ENCODE measurements at regions of chr1 and their contacts with region 1.

Region 1: GRCh38 chr1:206784471-206784903 is 12.2 kb upstream of the IL10 start:
- DNase-seq: peak; percentile 96
- ATAC-seq: peak; percentile 83
- H3K4me3 Mint-ChIP-seq: peak overlapping the region; percentile 32
- H3K27ac Mint-ChIP-seq: peak overlapping the region; percentile 79
- H3K4me1 Mint-ChIP-seq: peaks cover 65% of the 10 kb centered on the region
- H3K27me3 Mint-ChIP-seq: peaks cover 11% of the 10 kb centered on the region

Region 2: GRCh38 chr1:206725109-206725963 is 59.2 kb before region 1 on chr1:
- CTCF ChIA-PET with region 1: interaction called, 14 read pairs
- DNase-seq: peak; percentile 77
- ATAC-seq: peak; percentile 65
- H3K4me3 Mint-ChIP-seq: no peak overlapping the region
- H3K27ac Mint-ChIP-seq: peak overlapping the region; percentile 24
- H3K4me1 Mint-ChIP-seq: peaks cover 59% of the 10 kb centered on the region
- H3K27me3 Mint-ChIP-seq: no peaks in the 10 kb centered on the region

Region 3: DNA sequence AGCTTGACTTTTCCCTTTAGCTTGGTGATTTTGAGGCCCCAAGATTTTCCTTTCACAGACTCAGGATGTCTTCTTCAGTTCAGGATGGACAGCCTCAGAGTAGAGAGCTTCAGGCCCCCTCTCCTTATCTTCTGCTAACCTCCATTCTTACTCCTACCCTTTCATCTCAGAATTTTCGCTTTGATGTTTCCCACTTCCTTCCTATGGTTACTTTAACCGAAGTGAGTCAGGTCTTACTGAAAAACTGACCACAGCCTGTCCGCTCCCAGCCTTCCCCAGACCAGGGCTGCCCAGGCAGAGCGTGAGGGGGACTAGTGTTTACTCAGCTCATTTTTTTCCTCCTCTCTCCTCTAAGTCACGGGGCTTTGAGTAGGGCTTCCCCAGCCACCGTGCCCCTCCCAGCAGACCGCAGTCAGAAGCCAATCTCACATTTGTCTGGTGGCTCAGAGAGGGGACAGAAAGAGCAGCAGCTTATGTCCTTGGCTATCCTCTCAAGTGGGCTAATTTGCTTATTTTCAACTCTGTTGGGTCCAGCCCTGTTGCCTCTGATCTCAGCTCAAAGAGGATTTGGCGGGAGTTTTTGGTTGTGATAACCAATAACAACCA is 18.1 kb before region 1 on chr1:
- CTCF ChIA-PET with region 1: interaction called, 92 read pairs
- DNase-seq: peak; percentile 91
- ATAC-seq: peak; percentile 68
- H3K4me3 Mint-ChIP-seq: peak overlapping the region; percentile 13
- H3K27ac Mint-ChIP-seq: peak overlapping the region; percentile 80
- H3K4me1 Mint-ChIP-seq: peaks cover 64% of the 10 kb centered on the region
- H3K27me3 Mint-ChIP-seq: peaks cover 34% of the 10 kb centered on the region

Region 4: GRCh38 chr1:206803221-206803730 is 18.8 kb after region 1 on chr1:
- CTCF ChIA-PET with region 1: interaction called, 22 read pairs
- DNase-seq: peak; percentile 90
- ATAC-seq: peak; percentile 91
- H3K4me3 Mint-ChIP-seq: no peak overlapping the region
- H3K27ac Mint-ChIP-seq: peak overlapping the region; percentile 86
- H3K4me1 Mint-ChIP-seq: peaks cover 89% of the 10 kb centered on the region
- H3K27me3 Mint-ChIP-seq: peaks cover 27% of the 10 kb centered on the region

Region 5: DNA sequence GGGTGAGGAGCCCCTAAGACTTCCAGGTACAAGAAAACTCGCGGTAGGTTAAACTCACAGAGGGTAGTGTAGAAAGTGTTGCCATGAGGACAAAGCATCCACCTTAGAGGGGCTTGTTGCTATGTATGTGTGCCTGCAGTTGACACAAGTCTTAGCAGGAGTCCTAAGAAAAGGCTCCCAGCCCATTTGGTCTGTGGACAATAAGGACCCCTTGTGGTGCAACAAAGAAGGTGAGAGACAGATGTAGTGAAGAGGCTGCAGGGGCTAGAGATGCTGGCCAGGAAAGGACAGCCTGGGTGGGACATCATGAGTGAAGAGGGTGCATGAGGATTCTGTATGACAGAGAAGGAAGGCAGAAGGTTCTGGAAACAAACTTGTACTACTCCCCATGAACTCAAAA is 24.1 kb after region 1 on chr1:
- CTCF ChIA-PET with region 1: interaction called, 22 read pairs
- DNase-seq: peak; percentile 72
- ATAC-seq: peak; percentile 89
- H3K4me3 Mint-ChIP-seq: no peak overlapping the region
- H3K27ac Mint-ChIP-seq: peak overlapping the region; percentile 18
- H3K4me1 Mint-ChIP-seq: peaks cover 55% of the 10 kb centered on the region
- H3K27me3 Mint-ChIP-seq: peaks cover 2% of the 10 kb centered on the region

Region 6: DNA sequence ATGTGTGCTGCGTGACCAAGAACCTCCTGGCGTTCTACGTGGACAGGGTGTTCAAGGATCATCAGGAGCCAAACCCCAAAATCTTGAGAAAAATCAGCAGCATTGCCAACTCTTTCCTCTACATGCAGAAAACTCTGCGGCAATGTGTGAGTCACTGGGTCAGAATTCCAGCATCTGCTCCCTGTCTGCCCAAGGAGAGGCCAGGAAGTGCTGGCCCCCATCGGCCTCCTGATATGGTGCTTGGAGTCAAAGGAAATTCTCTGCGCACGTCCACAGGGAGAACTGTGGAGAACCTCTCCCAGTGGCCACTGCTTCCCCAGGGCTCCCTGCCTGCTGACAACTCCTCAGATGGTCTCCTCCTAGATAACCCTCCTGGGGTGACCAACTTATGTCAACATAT is 55.4 kb after region 1 on chr1:
- CTCF ChIA-PET with region 1: no interaction called
- DNase-seq: no peak
- ATAC-seq: no peak
- H3K4me3 Mint-ChIP-seq: no peak overlapping the region
- H3K27ac Mint-ChIP-seq: no peak overlapping the region
- H3K4me1 Mint-ChIP-seq: peaks cover 2% of the 10 kb centered on the region
- H3K27me3 Mint-ChIP-seq: peaks cover 27% of the 10 kb centered on the region

Region 7: DNA sequence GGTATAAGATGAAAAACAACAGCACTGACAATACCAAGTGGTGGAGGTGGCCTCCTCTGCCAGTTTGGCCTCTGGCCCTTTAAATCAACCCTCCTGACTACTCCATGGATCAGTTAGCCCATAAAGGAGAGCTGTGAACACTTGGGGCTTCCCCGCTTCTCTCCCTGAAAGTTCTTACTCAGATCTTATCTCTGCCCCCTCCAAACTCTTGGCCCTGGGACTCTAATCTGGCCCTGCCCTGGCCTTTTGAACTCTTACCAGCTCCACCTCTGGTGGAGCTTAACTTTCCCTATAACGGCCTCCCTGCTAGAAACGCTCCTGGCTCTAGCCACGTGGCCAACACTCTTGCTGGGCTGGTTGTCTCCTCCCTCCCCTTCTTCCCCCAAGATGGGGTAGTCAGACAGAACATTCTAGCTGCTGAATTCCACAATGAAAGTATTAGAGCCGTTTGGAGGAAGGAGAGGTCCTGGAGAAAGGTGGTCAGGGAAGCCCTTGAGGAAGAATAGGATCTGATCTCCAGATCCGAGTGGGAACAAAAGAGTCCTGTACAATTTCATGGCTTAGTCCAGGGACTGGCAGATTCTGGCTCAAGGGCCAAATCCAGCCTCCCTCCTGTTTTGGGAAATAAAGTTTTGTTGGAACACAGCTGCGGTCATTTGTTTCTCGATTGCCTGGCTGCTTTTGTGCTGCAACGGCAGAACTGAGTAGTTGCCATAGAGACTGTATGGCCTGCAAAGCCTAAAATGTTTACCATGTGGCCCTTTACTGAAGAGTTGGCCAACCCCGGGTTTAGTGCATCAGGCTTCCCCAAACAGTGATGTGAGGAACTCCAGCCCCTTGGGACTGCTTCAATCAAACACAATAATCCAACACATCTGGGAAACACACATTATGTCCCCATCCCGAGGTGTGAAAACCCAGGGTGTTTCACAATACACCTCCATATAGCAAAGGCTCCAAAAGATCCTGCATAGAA is 171.3 kb after region 1 on chr1:
- CTCF ChIA-PET with region 1: no interaction called
- DNase-seq: no peak
- ATAC-seq: no peak
- H3K4me3 Mint-ChIP-seq: no peak overlapping the region
- H3K27ac Mint-ChIP-seq: no peak overlapping the region
- H3K4me1 Mint-ChIP-seq: peaks cover 12% of the 10 kb centered on the region
- H3K27me3 Mint-ChIP-seq: peaks cover 7% of the 10 kb centered on the region